Common myeloid progenitor, CD34-positive (primary cell): ENCODE measurements at regions of chr9 and their contacts with region 1.

Region 1: DNA sequence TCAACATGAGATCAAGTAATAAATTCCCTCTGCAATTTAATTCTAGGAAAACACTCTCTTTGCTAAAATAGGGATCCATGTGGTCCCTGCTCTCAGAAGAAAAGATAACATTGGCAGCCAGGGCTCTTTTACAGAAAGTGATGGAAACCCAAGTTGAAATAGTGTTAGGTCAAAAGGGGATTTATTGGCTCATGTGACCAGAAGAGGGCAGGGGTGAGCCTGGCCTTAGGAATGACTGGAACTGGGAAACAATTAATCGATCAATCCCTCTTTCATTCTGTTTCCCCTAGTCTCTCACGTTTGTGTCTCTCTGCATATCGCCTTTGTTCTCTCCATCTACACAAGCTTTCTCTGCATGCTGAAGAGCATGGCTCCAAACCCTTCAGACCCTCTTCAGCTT is 58.3 kb upstream of the ALDH1B1 start:
- DNase-seq: peak; percentile 6 to 14 (median 12)
- H3K4me3 ChIP-seq: no peak overlapping the region
- H3K27ac ChIP-seq: no peak overlapping the region
- H3K4me1 ChIP-seq: peaks cover 0 to 2% (median 0%) of the 10 kb centered on the region in 4 experiments
- H3K27me3 ChIP-seq: no peaks in the 10 kb centered on the region

Region 2: GRCh38 chr9:38361473-38361850 is 27.2 kb after region 1 on chr9:
- CTCF ChIA-PET with region 1: interaction called, 10 read pairs
- POLR2A ChIA-PET with region 1: no interaction called
- DNase-seq: no peak
- H3K4me3 ChIP-seq: no peak overlapping the region
- H3K27ac ChIP-seq: no peak overlapping the region
- H3K4me1 ChIP-seq: peaks cover 0 to 35% (median 17%) of the 10 kb centered on the region in 4 experiments
- H3K27me3 ChIP-seq: no peaks in the 10 kb centered on the region